Activated CD4-positive, alpha-beta T cell treated with anti-CD3 and anti-CD28 coated beads for 36 hours (primary cell): ENCODE measurements at regions of chr18 and their contacts with region 1.

Region 1: GRCh38 chr18:36688020-36688965 is 140.5 kb downstream of the TPGS2 start:
- DNase-seq: peak; percentile 70
- ATAC-seq: no peak
- H3K4me3 Mint-ChIP-seq: no peak overlapping the region
- H3K27ac Mint-ChIP-seq: no peak overlapping the region
- H3K4me1 Mint-ChIP-seq: no peaks in the 10 kb centered on the region
- H3K27me3 Mint-ChIP-seq: peaks cover 18% of the 10 kb centered on the region

Region 2: DNA sequence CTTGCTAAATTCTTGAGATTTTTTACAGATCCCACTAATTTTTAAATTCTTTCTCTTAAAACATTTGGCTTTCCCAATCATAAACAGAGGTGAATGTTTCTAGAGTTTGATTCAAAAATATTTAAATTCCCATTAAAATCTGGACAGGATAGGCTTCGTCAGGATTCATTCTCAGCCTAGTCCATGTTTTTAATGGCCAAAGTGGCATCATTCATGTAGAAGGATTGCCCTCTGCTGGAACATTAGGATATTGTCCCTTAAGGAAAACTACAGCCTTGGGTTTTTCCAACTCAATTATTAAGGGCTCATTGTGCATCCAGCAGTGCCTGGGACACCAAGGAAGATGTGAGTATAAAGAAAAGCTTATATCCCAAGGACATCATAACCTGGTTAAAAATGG is 68.8 kb after region 1 on chr18:
- CTCF ChIA-PET with region 1: interaction called, 5 read pairs
- POLR2A ChIA-PET with region 1: no interaction called
- intact Hi-C with region 1: loop called (anchors 1 to 5 kb)
- DNase-seq: no peak
- ATAC-seq: no peak
- H3K4me3 Mint-ChIP-seq: no peak overlapping the region
- H3K27ac Mint-ChIP-seq: no peak overlapping the region
- H3K4me1 Mint-ChIP-seq: no peaks in the 10 kb centered on the region
- H3K27me3 Mint-ChIP-seq: peaks cover 9% of the 10 kb centered on the region

Region 3: GRCh38 chr18:36809590-36810381 is 121.5 kb after region 1 on chr18:
- CTCF ChIA-PET with region 1: interaction called, 46 read pairs
- POLR2A ChIA-PET with region 1: no interaction called
- intact Hi-C with region 1: loop called (anchors 1 kb)
- DNase-seq: peak; percentile 38
- ATAC-seq: peak; percentile 94
- H3K4me3 Mint-ChIP-seq: no peak overlapping the region
- H3K27ac Mint-ChIP-seq: no peak overlapping the region
- H3K4me1 Mint-ChIP-seq: peaks cover 14% of the 10 kb centered on the region
- H3K27me3 Mint-ChIP-seq: no peaks in the 10 kb centered on the region

Region 4: DNA sequence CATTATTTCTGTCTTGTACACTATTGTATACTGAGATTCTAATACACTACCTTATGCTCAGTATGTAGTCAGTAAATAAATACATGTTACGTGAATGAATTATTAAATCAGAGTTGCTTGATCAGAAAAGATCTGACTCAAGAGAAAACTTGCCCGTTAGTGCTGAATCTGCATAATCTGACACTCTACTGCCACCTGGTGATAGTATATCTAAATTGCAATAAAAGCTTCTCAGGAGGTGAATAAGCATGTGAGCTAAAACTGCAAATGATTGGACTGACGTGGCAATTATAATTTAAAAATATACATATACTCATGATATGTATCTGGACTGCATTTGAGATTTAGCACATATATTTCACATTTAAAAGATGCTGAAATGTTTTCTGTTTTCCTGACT is 211.0 kb after region 1 on chr18:
- CTCF ChIA-PET with region 1: interaction called, 6 read pairs
- POLR2A ChIA-PET with region 1: no interaction called
- intact Hi-C with region 1: loop called (anchors 5 kb)
- DNase-seq: no peak
- ATAC-seq: no peak
- H3K4me3 Mint-ChIP-seq: no peak overlapping the region
- H3K27ac Mint-ChIP-seq: no peak overlapping the region
- H3K4me1 Mint-ChIP-seq: no peaks in the 10 kb centered on the region
- H3K27me3 Mint-ChIP-seq: no peaks in the 10 kb centered on the region